GM10248 (cell line): ENCODE measurements at regions of chr17 and their contacts with region 1.

Region 1: GRCh38 chr17:14748031-14748710 is 447.3 kb downstream of the HS3ST3B1 start:
- DNase-seq: peak; percentile 25
- CTCF ChIP-seq: no peak

Region 2: GRCh38 chr17:14761052-14761385 is 12.8 kb after region 1 on chr17:
- CTCF ChIA-PET with region 1: interaction called, 31 read pairs
- POLR2A ChIA-PET with region 1: interaction called, 4 read pairs
- DNase-seq: no peak
- CTCF ChIP-seq: no peak